ENCODE measurements at regions of chr11 and their contacts with region 1.

Region 1: DNA sequence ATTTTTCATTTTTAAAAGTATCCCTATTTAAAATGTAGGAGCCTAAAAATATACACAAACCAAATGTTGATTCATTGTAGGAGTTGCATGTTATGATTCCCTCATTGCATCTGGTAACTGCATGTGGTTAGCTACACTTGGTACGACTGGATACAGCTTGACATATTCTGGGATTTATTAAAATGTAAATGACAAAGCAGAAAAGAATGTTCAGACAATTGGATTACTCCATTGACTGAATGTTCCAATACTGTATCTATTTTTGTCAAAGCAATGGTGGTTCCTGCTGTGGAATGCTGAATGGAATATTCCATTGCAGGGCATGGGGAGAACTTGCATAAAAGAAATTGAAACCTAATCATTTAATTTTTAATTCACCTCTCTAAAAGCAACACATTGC is 30.8 kb downstream of the BLID start:
- DNase-seq: no peak
- ATAC-seq: no peak
- H3K4me3 Mint-ChIP-seq: no peak overlapping the region
- H3K27ac Mint-ChIP-seq: no peak overlapping the region
- H3K4me1 Mint-ChIP-seq: no peaks in the 10 kb centered on the region
- H3K27me3 Mint-ChIP-seq: no peaks in the 10 kb centered on the region
- CTCF ChIP-seq: no peak

Region 2: DNA sequence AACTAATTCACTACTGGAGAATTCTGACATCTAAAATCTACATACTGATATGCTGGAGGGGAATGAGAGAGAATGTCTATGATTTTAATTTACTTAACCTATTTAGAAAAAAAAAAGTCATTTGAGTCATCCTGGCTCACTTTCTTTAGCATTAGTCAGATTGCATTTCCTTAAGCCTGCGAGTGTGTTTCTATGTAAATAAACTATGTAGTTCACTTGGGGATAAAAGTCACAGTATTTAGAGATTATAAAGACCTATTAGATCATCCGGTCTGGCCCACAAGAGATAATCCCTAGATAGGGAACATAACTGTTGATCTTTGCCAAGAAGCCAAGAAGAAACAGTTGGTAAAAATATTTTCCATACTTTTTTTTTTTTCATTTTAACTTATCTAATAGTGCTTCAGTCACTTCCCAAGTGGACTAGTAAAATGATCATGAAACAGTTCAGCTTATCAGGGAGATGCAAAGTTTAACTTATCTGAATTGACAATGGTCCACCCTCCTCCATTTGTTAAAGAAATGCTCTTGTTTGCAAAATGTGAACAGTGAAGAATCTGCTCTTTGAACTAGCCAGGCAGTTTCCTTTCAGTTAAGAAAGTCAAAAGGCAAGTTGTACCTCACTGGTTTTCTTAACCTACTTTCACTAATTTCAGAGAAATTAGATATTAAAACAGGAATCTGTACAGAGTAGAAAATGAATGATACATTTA is 52.0 kb after region 1 on chr11:
- CTCF ChIA-PET with region 1: no interaction called
- POLR2A ChIA-PET with region 1: no interaction called
- intact Hi-C with region 1: no loop called
- DNase-seq: no peak
- ATAC-seq: no peak
- H3K4me3 Mint-ChIP-seq: no peak overlapping the region
- H3K27ac Mint-ChIP-seq: no peak overlapping the region
- H3K4me1 Mint-ChIP-seq: no peaks in the 10 kb centered on the region
- H3K27me3 Mint-ChIP-seq: peaks cover 4% of the 10 kb centered on the region
- CTCF ChIP-seq: no peak

Region 3: DNA sequence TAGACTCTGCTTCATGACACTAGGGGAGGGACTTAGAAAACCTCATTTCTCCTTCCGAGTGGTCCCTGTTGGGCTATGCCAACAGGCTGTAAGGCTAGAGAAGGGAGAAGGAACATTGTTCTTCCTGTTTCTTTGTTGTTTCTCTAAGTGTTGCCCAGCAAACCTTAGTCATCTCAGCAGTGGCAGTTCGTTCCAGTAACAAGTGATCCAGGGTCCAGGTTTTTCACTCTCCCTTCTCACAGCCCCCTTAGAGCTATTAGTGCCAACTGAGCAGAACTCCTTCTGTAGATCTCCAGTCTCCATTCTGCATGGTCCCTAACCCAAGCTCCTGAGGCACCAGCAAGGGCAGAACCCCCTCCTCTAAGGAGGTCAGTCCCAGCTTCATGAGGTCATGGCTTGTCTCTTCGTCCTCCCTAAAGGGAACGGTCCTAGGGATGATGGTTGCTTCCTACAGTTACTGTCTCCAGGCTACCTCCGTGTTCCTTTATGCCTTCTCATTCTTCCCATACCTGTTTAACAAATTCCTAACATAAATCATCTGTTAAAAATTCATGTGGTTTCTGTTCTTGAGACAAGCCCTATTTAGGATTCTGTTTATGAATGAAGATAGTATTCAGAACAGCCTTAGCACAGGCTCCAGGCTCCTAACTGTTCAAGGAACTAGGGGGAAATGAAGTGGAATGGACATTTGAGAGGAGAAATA is 401.7 kb after region 1 on chr11:
- CTCF ChIA-PET with region 1: no interaction called
- POLR2A ChIA-PET with region 1: interaction called, 11 read pairs
- intact Hi-C with region 1: no loop called
- DNase-seq: no peak
- ATAC-seq: no peak
- H3K4me3 Mint-ChIP-seq: no peak overlapping the region
- H3K27ac Mint-ChIP-seq: no peak overlapping the region
- H3K4me1 Mint-ChIP-seq: no peaks in the 10 kb centered on the region
- H3K27me3 Mint-ChIP-seq: peaks cover 8% of the 10 kb centered on the region
- CTCF ChIP-seq: no peak

Measured in activated B cell treated with CpG ODN at 0.5 μM for 24 hours (primary cell).